RWPE1 (cell line): ENCODE measurements at regions of chr10 and their contacts with region 1.

Region 1: DNA sequence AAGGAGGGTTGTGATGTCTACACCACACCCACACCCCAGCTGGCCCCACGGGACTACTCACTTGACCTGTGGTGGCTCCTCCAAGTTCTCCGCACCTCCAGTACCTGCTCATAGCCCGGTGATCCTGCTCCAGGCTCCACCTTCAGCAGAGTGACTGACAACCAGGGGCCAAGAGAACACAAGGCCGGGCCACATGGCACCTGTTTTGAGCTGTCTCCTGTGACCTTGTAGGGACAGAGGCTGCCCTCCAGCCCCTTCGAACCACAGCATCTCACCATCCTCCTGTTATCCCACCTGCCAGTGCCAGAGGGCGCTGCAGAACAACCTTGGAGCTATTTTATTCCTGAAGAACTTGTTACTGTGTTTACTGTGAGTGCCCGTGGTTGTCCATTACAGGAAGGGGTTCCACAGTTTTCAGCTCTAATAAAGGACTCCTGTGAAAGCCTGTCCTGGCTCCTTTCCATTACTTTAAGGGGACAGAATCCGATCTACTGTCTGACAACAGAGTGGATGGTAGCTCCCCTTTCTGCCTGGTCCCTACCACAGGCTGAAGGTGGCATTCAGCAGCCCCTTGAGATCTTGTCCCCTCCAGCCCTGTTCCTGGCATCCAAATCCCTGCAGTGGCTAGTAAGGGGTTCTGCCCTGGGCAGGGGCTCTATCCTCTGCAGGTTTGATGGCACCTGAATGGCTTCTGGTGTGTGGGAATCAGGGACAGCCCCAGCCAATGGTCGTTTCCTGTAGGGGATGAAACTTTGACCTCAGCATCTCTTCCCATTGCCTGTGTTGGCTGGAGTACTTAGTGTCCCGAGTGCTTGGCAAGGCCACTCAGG is 50.8 kb downstream of the C10orf120 start:
- DNase-seq: peak; percentile 50
- H3K27ac ChIP-seq: no peak overlapping the region
- CTCF ChIP-seq: peak; percentile 49

Region 2: GRCh38 chr10:122703439-122704118 is 54.8 kb after region 1 on chr10:
- CTCF ChIA-PET with region 1: interaction called, 11 read pairs
- POLR2A ChIA-PET with region 1: no interaction called
- DNase-seq: peak; percentile 90
- H3K27ac ChIP-seq: no peak overlapping the region
- CTCF ChIP-seq: peak; percentile 86